Naive thymus-derived CD8-positive, alpha-beta T cell (primary cell): ENCODE measurements at regions of chr11 and their contacts with region 1.

Region 1: DNA sequence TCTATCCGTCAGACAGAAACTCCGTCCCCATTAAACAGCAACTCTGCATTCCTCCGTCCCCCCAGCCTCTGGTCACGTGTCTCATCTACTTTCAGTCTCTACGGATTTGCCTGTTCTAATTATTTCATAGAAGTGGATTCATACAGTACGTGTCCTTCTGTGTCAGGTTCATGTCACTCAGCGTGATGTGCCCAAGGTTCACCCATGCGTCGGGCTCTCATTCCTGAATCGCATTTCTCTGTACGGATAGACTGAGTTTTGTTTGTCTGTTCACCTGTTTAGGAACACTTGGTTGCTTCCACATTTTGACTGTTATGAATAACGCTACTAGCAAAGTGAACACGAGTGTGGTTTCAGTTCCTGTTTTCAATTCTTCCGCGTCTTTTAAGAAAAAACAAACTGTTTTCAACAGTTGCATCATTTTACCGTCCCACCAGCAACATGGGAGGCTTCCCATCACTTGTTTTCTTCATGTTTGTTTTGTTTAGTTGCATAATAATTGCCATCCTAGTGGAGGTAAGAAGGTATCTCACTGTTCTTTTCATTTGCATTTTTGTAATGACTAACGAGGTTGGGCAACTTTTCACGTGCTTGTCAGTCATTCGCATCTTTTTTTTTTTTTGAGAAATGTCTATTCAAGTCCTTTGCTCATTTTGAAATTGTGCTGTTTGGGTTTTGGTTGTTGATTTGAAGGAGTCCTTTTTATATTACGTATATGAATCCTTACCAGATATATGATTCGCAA is 8.9 kb upstream of the NLRP6 start:
- DNase-seq: peak in 9 of 10 donors; percentile 49 to 91 (median 74)
- ATAC-seq: peak; percentile 55 to 79
- H3K4me3 Mint-ChIP-seq: peak overlapping the region; percentile 84 to 94 (median 88)
- H3K27ac Mint-ChIP-seq: peak overlapping the region; percentile 96 to 99 (median 98)
- H3K4me1 Mint-ChIP-seq: peaks cover 11 to 42% (median 36%) of the 10 kb centered on the region in 4 donors
- H3K27me3 Mint-ChIP-seq: no peaks in the 10 kb centered on the region

Region 2: DNA sequence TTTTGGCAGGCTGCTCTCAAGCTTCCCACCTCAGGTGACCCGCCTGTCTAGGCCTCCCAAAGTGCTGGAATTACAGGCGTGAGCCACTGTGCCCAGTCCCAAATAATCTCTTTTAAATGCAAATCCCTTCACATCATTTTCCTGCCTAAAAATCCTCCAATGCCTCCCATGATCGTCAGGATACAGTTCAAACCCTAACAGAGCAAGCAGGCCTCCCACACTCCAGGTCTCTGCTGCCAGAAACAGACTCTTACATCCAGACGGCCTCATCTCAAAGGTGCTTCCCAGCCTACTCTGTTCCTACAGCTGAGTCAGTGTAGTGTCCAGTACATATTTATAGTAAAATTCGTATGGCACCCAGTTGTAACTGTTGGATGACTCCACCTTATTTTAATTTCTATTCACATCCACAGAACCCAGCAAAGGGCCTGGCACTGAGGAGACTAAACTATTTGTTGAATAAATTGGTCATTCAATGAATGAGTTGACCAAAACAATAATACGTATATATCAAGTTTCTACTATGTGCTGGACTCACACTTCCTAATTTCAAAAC is 41.4 kb before region 1 on chr11:
- POLR2A ChIA-PET with region 1: no interaction called
- DNase-seq: no peak
- ATAC-seq: no peak
- H3K4me3 Mint-ChIP-seq: no peak overlapping the region
- H3K27ac Mint-ChIP-seq: peak overlapping the region in 2 of 10 donors; percentile 4 to 40
- H3K4me1 Mint-ChIP-seq: peaks cover 4 to 19% (median 6%) of the 10 kb centered on the region in 4 donors
- H3K27me3 Mint-ChIP-seq: no peaks in the 10 kb centered on the region

Region 3: GRCh38 chr11:250740-251299 is 18.5 kb before region 1 on chr11:
- POLR2A ChIA-PET with region 1: interaction called, 42 read pairs
- DNase-seq: peak; percentile 74 to 91 (median 84)
- ATAC-seq: peak; percentile 99 to 100
- H3K4me3 Mint-ChIP-seq: peak overlapping the region in 2 of 10 donors; percentile 23 to 37
- H3K27ac Mint-ChIP-seq: peak overlapping the region in 9 of 10 donors; percentile 67 to 96 (median 88)
- H3K4me1 Mint-ChIP-seq: peaks cover 9 to 20% (median 10%) of the 10 kb centered on the region in 4 donors
- H3K27me3 Mint-ChIP-seq: no peaks in the 10 kb centered on the region

Region 4: GRCh38 chr11:304915-305843 is 35.9 kb after region 1 on chr11:
- POLR2A ChIA-PET with region 1: interaction called, 28 read pairs
- DNase-seq: peak in 8 of 10 donors; percentile 59 to 86 (median 71)
- ATAC-seq: peak; percentile 11 to 30
- H3K4me3 Mint-ChIP-seq: peak overlapping the region in 7 of 10 donors; percentile 30 to 72 (median 36)
- H3K27ac Mint-ChIP-seq: peak overlapping the region; percentile 48 to 97 (median 88)
- H3K4me1 Mint-ChIP-seq: peaks cover 32 to 74% (median 63%) of the 10 kb centered on the region in 4 donors
- H3K27me3 Mint-ChIP-seq: peaks cover 0 to 2% (median 0%) of the 10 kb centered on the region in 5 donors

Region 5: DNA sequence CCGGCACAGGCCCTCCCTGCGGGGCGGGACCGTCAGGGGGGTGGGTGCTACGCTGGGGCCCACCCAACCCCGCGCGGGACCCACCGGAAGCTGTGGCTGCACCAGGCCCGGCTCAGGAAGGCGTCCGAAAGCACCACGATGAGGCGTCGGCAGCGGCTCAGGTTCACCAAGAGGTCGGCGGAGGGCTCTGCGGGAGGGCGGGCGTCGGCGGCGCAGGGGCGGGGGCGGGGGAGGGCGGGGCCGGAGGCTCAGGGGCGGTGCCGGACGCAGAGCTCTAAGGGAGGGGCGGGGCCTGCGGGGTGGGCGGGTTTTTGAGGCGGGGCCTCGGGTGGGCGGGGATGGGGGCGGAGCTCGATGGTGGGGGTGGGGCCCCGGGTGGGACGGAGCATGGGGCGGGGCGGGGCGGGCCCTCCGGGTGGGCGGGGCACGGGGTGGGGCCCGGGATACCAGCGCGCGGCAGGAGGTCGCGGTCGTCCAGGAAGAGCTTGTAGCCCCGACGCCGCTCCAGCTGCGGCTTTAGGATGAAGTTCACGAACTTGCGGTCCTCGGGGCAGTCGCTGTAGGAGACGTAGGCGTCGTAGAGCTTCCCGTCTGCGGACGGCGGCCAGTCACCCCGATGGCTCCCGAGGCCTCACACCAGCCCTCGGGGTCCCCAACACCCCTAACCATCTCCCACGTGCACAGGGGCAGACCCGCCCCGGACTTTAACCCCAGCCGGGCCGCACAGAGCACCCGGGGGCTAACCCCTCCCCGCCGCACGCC is 137.8 kb after region 1 on chr11:
- POLR2A ChIA-PET with region 1: interaction called, 18 read pairs
- DNase-seq: peak; percentile 62 to 98 (median 95)
- ATAC-seq: peak; percentile 90 to 95
- H3K4me3 Mint-ChIP-seq: peak overlapping the region in 7 of 10 donors; percentile 22 to 76 (median 58)
- H3K27ac Mint-ChIP-seq: peak overlapping the region in 9 of 10 donors; percentile 43 to 93 (median 79)
- H3K4me1 Mint-ChIP-seq: peaks cover 7 to 31% (median 15%) of the 10 kb centered on the region in 4 donors
- H3K27me3 Mint-ChIP-seq: no peaks in the 10 kb centered on the region